Panc1 (cell line): ENCODE measurements at regions of chr5 and their contacts with region 1.

Region 1: GRCh38 chr5:104186100-104186499 is 623.5 kb upstream of the NUDT12 start:
- DNase-seq: no peak
- ATAC-seq: no peak
- H3K4me3 ChIP-seq: no peak overlapping the region
- H3K27ac ChIP-seq: no peak overlapping the region
- H3K4me1 ChIP-seq: no peaks in the 10 kb centered on the region
- H3K27me3 ChIP-seq: no peaks in the 10 kb centered on the region
- CTCF ChIP-seq: no peak

Region 2: GRCh38 chr5:102823441-102823874 is 1362.6 kb before region 1 on chr5:
- CTCF ChIA-PET with region 1: no interaction called
- POLR2A ChIA-PET with region 1: no interaction called
- in situ Hi-C with region 1: no loop called
- intact Hi-C with region 1: loop called (anchors 10 kb)
- DNase-seq: no peak
- ATAC-seq: no peak
- H3K4me3 ChIP-seq: no peak overlapping the region
- H3K27ac ChIP-seq: no peak overlapping the region
- H3K4me1 ChIP-seq: no peaks in the 10 kb centered on the region
- H3K27me3 ChIP-seq: no peaks in the 10 kb centered on the region
- CTCF ChIP-seq: no peak

Region 3: DNA sequence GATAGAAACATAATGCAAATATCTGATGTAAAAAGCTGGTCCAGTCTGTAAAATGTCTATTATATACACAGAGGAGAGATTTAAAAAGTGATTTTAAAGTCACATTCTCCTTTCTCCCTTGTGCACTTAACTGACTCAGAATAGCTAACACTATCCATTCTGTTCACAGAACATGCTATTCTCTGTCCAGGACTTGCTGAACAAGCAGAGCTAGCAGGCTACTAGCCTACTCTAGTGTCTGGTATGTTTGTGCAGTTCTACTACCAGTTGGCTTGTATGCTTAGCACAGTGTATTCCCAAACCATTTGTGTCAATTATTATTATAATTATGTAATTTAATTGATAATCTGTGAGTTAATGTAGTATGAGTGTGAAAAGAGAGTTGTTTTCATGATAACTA is 461.8 kb before region 1 on chr5:
- CTCF ChIA-PET with region 1: no interaction called
- POLR2A ChIA-PET with region 1: no interaction called
- in situ Hi-C with region 1: no loop called
- intact Hi-C with region 1: no loop called
- DNase-seq: no peak
- ATAC-seq: no peak
- H3K4me3 ChIP-seq: no peak overlapping the region
- H3K27ac ChIP-seq: no peak overlapping the region
- H3K4me1 ChIP-seq: no peaks in the 10 kb centered on the region
- H3K27me3 ChIP-seq: no peaks in the 10 kb centered on the region
- CTCF ChIP-seq: no peak

Region 4: GRCh38 chr5:104443706-104444105 is 257.6 kb after region 1 on chr5:
- CTCF ChIA-PET with region 1: no interaction called
- POLR2A ChIA-PET with region 1: no interaction called
- in situ Hi-C with region 1: no loop called
- intact Hi-C with region 1: no loop called
- DNase-seq: no peak
- ATAC-seq: no peak
- H3K4me3 ChIP-seq: no peak overlapping the region
- H3K27ac ChIP-seq: no peak overlapping the region
- H3K4me1 ChIP-seq: no peaks in the 10 kb centered on the region
- H3K27me3 ChIP-seq: no peaks in the 10 kb centered on the region
- CTCF ChIP-seq: no peak